ENCODE measurements at regions of chr14 and their contacts with region 1.

Region 1: GRCh38 chr14:75709207-75709812 is 48.3 kb downstream of the TTLL5 start:
- DNase-seq: peak; percentile 69
- H3K4me3 Mint-ChIP-seq: no peak overlapping the region
- H3K27ac Mint-ChIP-seq: no peak overlapping the region
- H3K4me1 Mint-ChIP-seq: no peaks in the 10 kb centered on the region
- H3K27me3 Mint-ChIP-seq: no peaks in the 10 kb centered on the region

Region 2: GRCh38 chr14:75673345-75674035 is 35.8 kb before region 1 on chr14:
- CTCF ChIA-PET with region 1: interaction called, 5 read pairs
- POLR2A ChIA-PET with region 1: no interaction called
- intact Hi-C with region 1: loop called (anchors 1 kb)
- DNase-seq: no peak
- H3K4me3 Mint-ChIP-seq: no peak overlapping the region
- H3K27ac Mint-ChIP-seq: peak overlapping the region; percentile 40
- H3K4me1 Mint-ChIP-seq: peaks cover 27% of the 10 kb centered on the region
- H3K27me3 Mint-ChIP-seq: no peaks in the 10 kb centered on the region

Region 3: DNA sequence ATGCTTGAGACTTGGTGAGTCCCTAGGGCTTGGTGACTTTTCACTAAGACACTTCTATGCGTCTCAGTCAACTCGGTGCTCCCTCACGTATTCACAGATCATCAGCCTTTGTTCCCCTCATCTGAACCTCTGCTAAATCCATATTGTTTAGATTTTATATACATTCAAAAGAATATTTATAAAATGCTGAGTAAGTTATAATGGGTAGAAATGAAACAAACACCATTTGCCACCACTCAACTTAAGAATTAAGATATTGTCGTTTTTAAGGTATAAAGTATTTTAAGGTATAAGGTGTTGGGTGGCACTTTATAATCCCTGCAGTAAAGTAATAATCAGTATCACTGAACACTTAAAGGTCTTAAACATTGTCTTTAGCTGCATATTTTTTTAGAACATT is 54.7 kb after region 1 on chr14:
- CTCF ChIA-PET with region 1: interaction called, 11 read pairs
- POLR2A ChIA-PET with region 1: no interaction called
- intact Hi-C with region 1: no loop called
- DNase-seq: no peak
- H3K4me3 Mint-ChIP-seq: no peak overlapping the region
- H3K27ac Mint-ChIP-seq: no peak overlapping the region
- H3K4me1 Mint-ChIP-seq: no peaks in the 10 kb centered on the region
- H3K27me3 Mint-ChIP-seq: no peaks in the 10 kb centered on the region

Region 4: GRCh38 chr14:75879031-75879430 is 169.7 kb after region 1 on chr14:
- CTCF ChIA-PET with region 1: interaction called, 12 read pairs
- POLR2A ChIA-PET with region 1: interaction called, 3 read pairs
- intact Hi-C with region 1: no loop called
- DNase-seq: no peak
- H3K4me3 Mint-ChIP-seq: no peak overlapping the region
- H3K27ac Mint-ChIP-seq: no peak overlapping the region
- H3K4me1 Mint-ChIP-seq: peaks cover 20% of the 10 kb centered on the region
- H3K27me3 Mint-ChIP-seq: no peaks in the 10 kb centered on the region

Region 5: DNA sequence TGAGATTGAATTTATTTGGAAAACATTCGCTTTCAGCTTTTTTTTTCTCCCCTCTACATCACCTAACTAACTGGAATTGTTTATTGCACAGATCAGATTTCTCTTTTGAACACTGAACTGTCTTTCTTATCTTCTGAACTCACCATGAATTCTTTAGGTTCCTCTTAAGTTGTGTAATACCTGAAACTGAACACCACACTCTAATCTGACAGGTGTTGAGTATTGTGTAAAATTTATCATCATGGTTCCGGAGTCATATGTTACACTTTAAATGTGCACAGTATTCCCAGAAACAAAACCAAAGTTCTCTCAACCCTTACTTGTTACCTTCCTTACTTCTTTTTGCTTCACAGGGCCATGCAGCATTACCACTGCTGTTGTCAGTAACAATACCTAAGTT is 205.8 kb after region 1 on chr14:
- CTCF ChIA-PET with region 1: no interaction called
- POLR2A ChIA-PET with region 1: no interaction called
- intact Hi-C with region 1: no loop called
- DNase-seq: no peak
- H3K4me3 Mint-ChIP-seq: no peak overlapping the region
- H3K27ac Mint-ChIP-seq: no peak overlapping the region
- H3K4me1 Mint-ChIP-seq: no peaks in the 10 kb centered on the region
- H3K27me3 Mint-ChIP-seq: no peaks in the 10 kb centered on the region

Region 6: GRCh38 chr14:75982266-75983018 is 273.1 kb after region 1 on chr14:
- CTCF ChIA-PET with region 1: interaction called, 181 read pairs
- POLR2A ChIA-PET with region 1: no interaction called
- intact Hi-C with region 1: loop called (anchors 1 kb)
- DNase-seq: peak; percentile 84
- H3K4me3 Mint-ChIP-seq: peak overlapping the region; percentile 72
- H3K27ac Mint-ChIP-seq: no peak overlapping the region
- H3K4me1 Mint-ChIP-seq: peaks cover 47% of the 10 kb centered on the region
- H3K27me3 Mint-ChIP-seq: peaks cover 2% of the 10 kb centered on the region

Region 7: DNA sequence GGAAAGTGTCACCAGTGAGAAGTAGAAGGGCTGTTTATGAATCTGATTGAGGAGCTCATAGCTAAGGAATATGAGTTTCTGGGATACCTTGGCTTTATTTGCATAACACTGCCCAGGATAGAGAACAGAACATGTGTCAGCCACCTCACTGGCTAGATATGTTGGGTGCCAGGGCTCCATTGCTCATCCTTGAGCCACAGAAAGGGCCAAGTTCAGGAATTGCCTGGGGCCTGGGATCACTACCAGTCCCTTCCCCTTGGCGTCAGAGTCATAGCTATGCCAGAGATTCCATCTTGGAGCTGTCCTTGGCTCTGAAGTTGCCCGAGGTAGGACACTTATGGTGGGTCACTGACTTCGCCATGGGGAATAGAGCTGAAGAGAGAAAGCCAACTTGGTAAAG is 325.3 kb after region 1 on chr14:
- CTCF ChIA-PET with region 1: no interaction called
- POLR2A ChIA-PET with region 1: no interaction called
- intact Hi-C with region 1: no loop called
- DNase-seq: no peak
- H3K4me3 Mint-ChIP-seq: no peak overlapping the region
- H3K27ac Mint-ChIP-seq: no peak overlapping the region
- H3K4me1 Mint-ChIP-seq: no peaks in the 10 kb centered on the region
- H3K27me3 Mint-ChIP-seq: no peaks in the 10 kb centered on the region